CD14-positive monocyte (primary cell): ENCODE measurements at regions of chr5 and their contacts with region 1.

Region 1: DNA sequence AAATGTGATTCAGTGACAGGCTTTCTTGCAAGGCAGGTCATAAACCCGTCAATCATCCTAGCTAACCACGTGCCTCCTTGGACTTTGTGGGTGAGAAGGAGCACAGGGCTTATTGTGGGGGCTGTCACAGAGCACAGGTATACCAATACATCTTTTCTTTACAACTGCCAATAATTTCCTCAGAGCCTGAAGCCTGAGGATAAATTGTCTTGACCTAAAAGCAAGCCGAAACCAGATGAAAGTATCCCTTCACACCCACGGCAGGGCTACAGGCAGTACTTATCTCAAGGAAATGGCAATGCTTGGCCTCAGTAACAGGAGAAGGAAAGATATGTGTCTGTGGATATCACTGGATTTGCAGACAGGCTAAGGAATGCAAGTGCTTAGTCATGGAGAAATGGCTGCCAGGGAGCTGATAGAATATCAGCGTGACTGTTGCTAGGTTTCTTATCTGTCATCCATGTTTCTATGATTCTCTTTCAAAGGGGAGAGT is 90.3 kb upstream of the ZNF366 start:
- DNase-seq: peak in 1 of 3 donors; percentile 17
- H3K4me3 ChIP-seq: no peak overlapping the region
- H3K4me3 Mint-ChIP-seq: no peak overlapping the region
- H3K27ac ChIP-seq: peak overlapping the region in 1 of 2 donors; percentile 81
- H3K27ac Mint-ChIP-seq: peak overlapping the region in 2 of 7 donors; percentile 46 to 62
- H3K4me1 ChIP-seq: peaks cover 32 to 33% of the 10 kb centered on the region in 2 donors
- H3K4me1 Mint-ChIP-seq: no peaks in the 10 kb centered on the region
- H3K27me3 ChIP-seq: no peaks in the 10 kb centered on the region
- H3K27me3 Mint-ChIP-seq: no peaks in the 10 kb centered on the region
- CTCF ChIP-seq: no peak

Region 2: GRCh38 chr5:72378636-72379290 is 218.7 kb before region 1 on chr5:
- intact Hi-C with region 1: loop called in 1 of 2 experiments (anchors 10 kb)
- DNase-seq: peak; percentile 73 to 90 (median 80)
- H3K4me3 ChIP-seq: no peak overlapping the region
- H3K4me3 Mint-ChIP-seq: peak overlapping the region in 1 of 2 donors; percentile 30
- H3K27ac ChIP-seq: peak overlapping the region in 1 of 2 donors; percentile 1
- H3K27ac Mint-ChIP-seq: peak overlapping the region in 4 of 7 donors; percentile 19 to 82 (median 68)
- H3K4me1 ChIP-seq: peaks cover 48 to 50% of the 10 kb centered on the region in 2 donors
- H3K4me1 Mint-ChIP-seq: peaks cover 50% of the 10 kb centered on the region
- H3K27me3 ChIP-seq: no peaks in the 10 kb centered on the region
- H3K27me3 Mint-ChIP-seq: no peaks in the 10 kb centered on the region
- CTCF ChIP-seq: no peak

Region 3: DNA sequence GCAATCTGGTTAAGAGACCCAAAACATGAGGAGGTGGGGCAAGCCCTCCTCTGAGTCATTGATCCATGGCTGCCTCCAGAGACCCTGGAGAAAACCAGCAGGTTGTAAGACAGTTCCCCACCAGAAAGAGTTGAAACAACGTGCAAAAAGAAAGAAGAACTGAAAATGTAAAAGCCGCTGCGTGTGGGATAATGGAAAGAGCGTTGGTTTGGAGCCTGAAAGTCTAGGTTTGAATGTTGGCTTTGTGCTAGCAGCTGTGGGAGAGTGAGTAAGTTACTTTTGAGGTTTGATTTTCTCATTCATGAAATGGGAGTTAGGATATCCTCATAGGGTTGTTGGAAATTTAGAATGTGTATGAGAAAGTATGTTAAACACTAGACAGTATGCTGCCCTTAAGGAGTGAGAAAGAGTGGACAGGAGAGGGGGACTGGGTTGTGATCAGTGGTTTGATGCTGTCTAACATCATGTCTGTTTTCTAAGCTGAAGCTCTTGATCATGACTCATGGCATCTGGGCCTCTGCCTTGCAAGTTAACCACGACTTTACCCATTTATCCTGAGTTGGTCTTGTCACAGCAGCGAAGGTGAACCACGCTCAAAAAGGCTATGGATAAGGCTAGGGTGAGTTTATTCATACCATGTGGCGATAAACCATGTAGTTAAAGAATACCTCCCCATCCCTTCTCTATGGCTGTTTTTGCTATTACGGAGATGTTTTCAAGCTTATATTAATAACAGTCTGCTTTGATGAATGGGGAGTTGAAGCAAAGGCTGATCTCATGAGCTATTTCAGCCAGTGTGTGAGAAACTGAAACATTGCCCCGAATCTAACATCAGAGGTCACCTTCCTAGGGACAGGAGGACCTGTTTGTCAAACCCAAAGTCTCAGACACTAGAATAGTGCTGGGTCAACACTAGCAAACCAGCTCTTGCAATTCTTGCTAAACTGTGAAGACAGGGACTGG is 131.6 kb before region 1 on chr5:
- intact Hi-C with region 1: loop called in 1 of 2 experiments (anchors 5 kb)
- DNase-seq: peak in 2 of 3 donors; percentile 30 to 55
- H3K4me3 ChIP-seq: peak overlapping the region in 1 of 3 experiments; percentile 26
- H3K4me3 Mint-ChIP-seq: peak overlapping the region; percentile 6 to 80
- H3K27ac ChIP-seq: peak overlapping the region; percentile 11 to 35
- H3K27ac Mint-ChIP-seq: peak overlapping the region; percentile 12 to 85 (median 73)
- H3K4me1 ChIP-seq: peaks cover 59 to 64% of the 10 kb centered on the region in 2 donors
- H3K4me1 Mint-ChIP-seq: peaks cover 62% of the 10 kb centered on the region
- H3K27me3 ChIP-seq: no peaks in the 10 kb centered on the region
- H3K27me3 Mint-ChIP-seq: peaks cover 0 to 1% (median 0%) of the 10 kb centered on the region in 3 donors
- CTCF ChIP-seq: no peak

Region 4: GRCh38 chr5:72816311-72817145 is 219.0 kb after region 1 on chr5 and contains the start of gene TNPO1:
- intact Hi-C with region 1: loop called in 1 of 2 experiments (anchors 10 kb)
- DNase-seq: peak; percentile 81
- H3K4me3 ChIP-seq: peak within 1 kb of the TSS; percentile 61 to 76 (median 74)
- H3K4me3 Mint-ChIP-seq: peak within 1 kb of the TSS; percentile 93 to 97
- H3K27ac ChIP-seq: peak within 1 kb of the TSS; percentile 85 to 87
- H3K27ac Mint-ChIP-seq: peak within 1 kb of the TSS; percentile 90 to 94 (median 92)
- H3K4me1 ChIP-seq: peaks cover 15 to 39% of the 10 kb centered on the region in 2 donors
- H3K4me1 Mint-ChIP-seq: peaks cover 29% of the 10 kb centered on the region
- H3K27me3 ChIP-seq: no peaks in the 10 kb centered on the region
- H3K27me3 Mint-ChIP-seq: no peaks in the 10 kb centered on the region
- CTCF ChIP-seq: no peak
- polyA plus RNA-seq, gene TNPO1: 9.3 to 28.1 (median 26.3) TPM

Region 5: DNA sequence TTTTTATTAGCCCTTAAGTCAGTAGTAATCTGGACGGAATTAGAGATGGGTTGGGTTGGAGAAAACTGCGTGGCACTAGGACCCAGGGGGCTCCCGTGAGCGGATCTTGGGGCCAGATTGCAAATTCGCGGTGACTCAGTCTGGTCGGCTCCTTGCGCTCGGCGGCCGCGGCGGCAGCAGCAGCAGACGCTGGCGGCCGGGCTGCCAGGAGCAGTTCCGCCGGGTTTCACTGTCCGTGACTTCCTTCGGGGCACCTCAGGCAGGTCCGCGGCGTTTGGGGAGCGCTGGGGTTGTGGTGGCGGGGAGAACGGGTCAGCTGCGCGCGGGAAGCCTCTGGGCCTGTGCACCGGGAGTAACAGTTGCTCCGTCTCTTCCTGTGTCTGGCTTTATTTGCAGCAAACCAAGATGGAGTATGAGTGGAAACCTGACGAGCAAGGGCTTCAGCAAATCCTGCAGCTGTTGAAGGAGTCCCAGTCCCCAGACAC is 250.5 kb after region 1 on chr5:
- intact Hi-C with region 1: loop called in 1 of 2 experiments (anchors 10 kb)
- DNase-seq: peak; percentile 85 to 86 (median 85)
- H3K4me3 ChIP-seq: peak overlapping the region; percentile 70 to 99 (median 85)
- H3K4me3 Mint-ChIP-seq: peak overlapping the region; percentile 98
- H3K27ac ChIP-seq: peak overlapping the region; percentile 87 to 95
- H3K27ac Mint-ChIP-seq: peak overlapping the region; percentile 92 to 97 (median 97)
- H3K4me1 ChIP-seq: peaks cover 30 to 59% of the 10 kb centered on the region in 2 donors
- H3K4me1 Mint-ChIP-seq: peaks cover 49% of the 10 kb centered on the region
- H3K27me3 ChIP-seq: no peaks in the 10 kb centered on the region
- H3K27me3 Mint-ChIP-seq: peaks cover 0 to 4% (median 0%) of the 10 kb centered on the region in 3 donors
- CTCF ChIP-seq: no peak